Aorta (tissue), 5 donors: ENCODE measurements at regions of chr6 and their contacts with region 1.

Region 1: GRCh38 chr6:167485186-167485978 is 160.5 kb downstream of the TTLL2 start:
- DNase-seq: no peak
- ATAC-seq: peak; percentile 68
- H3K4me3 ChIP-seq: no peak overlapping the region
- H3K27ac ChIP-seq: no peak overlapping the region
- H3K4me1 ChIP-seq: no peaks in the 10 kb centered on the region
- H3K27me3 ChIP-seq: no peaks in the 10 kb centered on the region

Region 2: DNA sequence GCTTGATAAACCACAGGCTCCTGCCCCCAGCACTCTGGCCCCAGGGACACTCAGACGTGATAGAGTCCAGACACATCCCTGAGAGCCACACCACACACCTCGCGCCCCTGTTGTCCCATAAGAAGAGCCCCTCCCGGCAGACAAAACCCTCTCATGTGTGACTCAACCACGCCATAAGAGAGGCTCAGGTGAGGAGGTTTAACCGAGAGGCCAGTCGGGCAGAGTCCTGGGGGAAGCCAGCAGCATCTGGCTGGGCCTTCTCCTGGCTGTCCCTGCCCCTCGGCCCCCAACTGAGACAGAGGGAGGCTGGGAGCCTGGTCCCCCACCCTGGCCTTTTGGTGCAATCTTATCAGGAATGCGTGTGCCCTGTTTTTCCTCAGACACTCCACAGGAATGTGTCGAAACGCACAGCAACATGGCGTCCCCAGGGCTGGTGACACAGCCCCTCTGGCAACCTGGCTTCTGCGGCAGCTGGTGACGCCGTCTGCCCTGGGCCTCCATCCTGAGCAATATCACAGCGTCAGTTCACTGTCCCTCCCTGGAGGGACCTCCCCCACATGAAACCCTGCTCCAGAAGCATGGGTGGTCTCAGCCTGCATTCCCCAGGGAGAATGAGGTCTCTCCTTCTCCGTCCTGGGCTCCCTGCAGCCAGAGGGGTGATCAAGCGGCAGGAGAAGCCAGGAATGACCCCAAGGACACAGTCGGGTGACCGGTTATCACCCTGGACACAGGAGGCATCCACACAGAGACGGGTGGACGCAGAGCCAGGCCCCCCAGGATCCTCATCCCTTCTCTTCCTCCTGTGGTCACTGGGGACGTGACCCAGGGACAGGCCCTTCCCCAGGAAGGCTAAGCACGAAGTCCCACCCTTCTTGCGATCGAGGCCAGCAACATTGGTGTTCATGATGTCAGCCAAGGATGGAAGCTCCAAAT is 184.8 kb after region 1 on chr6:
- intact Hi-C with region 1: loop called in 1 of 2 experiments (anchors 2 kb)
- DNase-seq: no peak
- ATAC-seq: no peak
- H3K4me3 ChIP-seq: no peak overlapping the region
- H3K27ac ChIP-seq: no peak overlapping the region
- H3K4me1 ChIP-seq: no peaks in the 10 kb centered on the region
- H3K27me3 ChIP-seq: no peaks in the 10 kb centered on the region